GM18951 (cell line): ENCODE measurements at regions of chr4 and their contacts with region 1.

Region 1: GRCh38 chr4:158856852-158857251 is 88.0 kb downstream of the FNIP2 start:
- POLR2A ChIP-seq: no peak

Region 2: GRCh38 chr4:159175085-159175988 is 318.5 kb after region 1 on chr4:
- in situ Hi-C with region 1: loop called (anchors 5 kb)
- POLR2A ChIP-seq: no peak

Region 3: GRCh38 chr4:159185591-159186023 is 328.8 kb after region 1 on chr4:
- in situ Hi-C with region 1: no loop called
- POLR2A ChIP-seq: no peak